ENCODE measurements at regions of chr16 and their contacts with region 1.

Region 1: DNA sequence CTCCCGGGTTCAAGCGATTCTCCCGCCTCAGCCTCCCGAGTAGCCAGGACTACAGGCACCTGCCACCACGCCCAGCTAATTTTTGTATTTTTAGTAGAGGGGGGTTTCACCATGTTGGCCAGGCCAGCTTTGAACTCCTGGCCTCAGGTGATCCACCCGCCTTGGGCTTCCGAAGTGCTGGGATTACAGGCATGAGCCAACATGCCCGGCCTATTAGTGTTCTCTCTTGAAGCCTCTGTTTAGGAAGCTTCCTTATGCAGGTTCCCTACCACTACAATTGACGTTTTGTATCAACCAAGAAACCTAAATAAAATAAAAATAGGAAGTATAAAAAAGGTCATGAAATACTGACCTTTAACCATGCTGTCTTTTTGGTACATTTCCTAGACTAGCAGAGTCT is 16.0 kb downstream of the CHST5 start:
- DNase-seq: no peak
- H3K4me3 ChIP-seq: no peak overlapping the region
- CTCF ChIP-seq: no peak

Region 2: DNA sequence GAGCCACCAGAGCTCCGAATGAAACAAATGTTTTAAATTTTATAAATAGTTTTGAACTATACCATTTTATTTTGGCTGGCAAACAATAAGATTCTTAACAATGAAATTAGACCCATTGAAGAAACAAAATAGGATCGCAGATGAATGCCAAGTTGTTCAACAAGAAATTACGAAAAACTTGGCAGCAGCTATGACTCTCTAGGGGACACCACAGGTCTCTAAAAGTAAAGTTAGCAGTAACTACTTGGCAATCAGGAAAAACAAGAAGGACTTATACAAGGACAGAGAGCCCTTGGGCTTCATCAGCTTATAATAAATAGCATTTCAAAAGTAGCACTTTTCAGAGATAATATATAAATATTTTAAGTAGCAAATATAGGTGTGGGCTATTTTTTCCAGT is 1827.0 kb before region 1 on chr16:
- CTCF ChIA-PET with region 1: no interaction called
- POLR2A ChIA-PET with region 1: no interaction called
- DNase-seq: no peak
- H3K4me3 ChIP-seq: no peak overlapping the region
- CTCF ChIP-seq: no peak

Region 3: DNA sequence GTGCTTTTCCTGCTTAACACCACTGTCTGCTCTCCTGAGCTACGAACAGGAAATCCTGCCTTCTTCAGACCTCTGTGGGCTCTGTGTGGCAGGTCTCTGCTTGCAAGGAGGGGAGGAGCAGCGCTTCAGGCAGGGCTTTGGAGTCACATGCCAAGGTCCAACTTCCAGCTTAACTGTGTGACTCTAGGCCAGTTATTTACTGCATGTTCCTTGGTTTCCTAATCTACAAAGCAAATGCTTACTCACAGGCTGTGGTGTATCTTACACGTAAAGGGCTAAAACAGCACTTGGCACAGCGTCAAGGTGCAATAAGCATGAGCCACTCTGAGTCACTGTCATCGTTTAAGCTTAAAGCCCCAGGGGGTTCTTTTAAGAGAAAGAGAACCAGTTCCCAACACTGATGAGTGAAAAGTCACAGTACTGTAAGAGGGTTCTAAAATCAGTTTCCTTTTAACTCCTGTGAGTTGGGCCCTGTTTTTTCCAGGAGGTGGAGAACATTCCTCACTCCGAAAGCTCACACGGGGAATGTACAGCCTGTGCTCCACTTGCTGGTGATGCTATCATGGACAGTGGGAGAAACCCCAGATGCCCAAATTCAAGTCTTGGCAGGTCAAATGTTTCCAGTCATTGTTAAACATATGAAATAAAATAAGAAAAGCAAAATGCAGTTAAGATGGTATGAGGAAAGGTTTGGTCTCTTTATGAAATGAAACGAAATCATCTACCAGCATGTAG is 214.3 kb before region 1 on chr16:
- CTCF ChIA-PET with region 1: no interaction called
- POLR2A ChIA-PET with region 1: no interaction called
- DNase-seq: peak; percentile 99
- H3K4me3 ChIP-seq: peak overlapping the region; percentile 10; the same call in 1 of the 2 replicates
- CTCF ChIP-seq: no peak

Region 4: DNA sequence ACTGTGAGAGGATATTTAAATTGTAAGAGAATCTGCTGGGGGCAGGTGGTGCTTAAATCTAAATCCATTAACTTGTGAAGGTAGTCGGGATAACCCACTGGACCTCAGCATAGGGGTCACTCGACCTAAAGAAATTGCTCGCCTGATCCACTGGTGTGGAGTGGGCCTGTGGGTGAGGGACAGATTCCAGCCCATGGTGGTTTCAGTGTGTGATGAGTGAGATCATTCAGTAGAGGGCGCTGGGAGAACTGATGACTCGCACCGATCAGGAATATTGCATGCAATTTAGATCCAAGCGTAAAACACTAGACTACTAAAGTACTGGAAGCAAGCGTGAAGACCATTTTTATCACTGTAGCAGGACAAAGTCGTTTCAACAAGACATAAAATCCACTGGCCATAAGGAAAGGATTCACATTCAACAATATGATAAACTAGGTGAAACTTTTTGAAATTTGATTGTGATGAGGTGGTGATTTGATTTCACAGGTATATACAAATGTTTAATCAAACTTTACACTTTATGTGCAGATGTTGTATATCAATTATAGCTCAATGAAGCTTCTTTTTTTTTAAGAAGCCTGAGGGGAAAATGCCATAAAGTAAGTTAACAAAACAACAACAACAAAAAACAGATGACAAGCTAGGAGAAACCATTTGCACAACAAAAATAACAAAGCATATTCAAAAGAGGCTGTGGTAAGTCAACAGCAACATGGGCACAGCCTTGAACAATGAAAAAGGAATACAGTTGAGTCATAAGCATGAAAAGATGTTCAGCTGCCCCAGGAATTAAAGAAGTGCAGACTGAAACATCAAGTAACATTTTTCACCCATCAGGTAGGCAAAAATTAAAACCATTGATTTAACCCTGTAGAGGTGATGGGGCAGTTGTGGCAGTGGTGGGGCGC is 47.9 kb before region 1 on chr16:
- CTCF ChIA-PET with region 1: interaction called, 18 read pairs
- POLR2A ChIA-PET with region 1: no interaction called
- DNase-seq: peak; percentile 9
- H3K4me3 ChIP-seq: no peak overlapping the region
- CTCF ChIP-seq: peak; percentile 78

Region 5: GRCh38 chr16:75506567-75506966 is 13.3 kb before region 1 on chr16:
- CTCF ChIA-PET with region 1: interaction called, 15 read pairs
- POLR2A ChIA-PET with region 1: interaction called, 8 read pairs
- DNase-seq: no peak
- H3K4me3 ChIP-seq: no peak overlapping the region
- CTCF ChIP-seq: no peak

Region 6: DNA sequence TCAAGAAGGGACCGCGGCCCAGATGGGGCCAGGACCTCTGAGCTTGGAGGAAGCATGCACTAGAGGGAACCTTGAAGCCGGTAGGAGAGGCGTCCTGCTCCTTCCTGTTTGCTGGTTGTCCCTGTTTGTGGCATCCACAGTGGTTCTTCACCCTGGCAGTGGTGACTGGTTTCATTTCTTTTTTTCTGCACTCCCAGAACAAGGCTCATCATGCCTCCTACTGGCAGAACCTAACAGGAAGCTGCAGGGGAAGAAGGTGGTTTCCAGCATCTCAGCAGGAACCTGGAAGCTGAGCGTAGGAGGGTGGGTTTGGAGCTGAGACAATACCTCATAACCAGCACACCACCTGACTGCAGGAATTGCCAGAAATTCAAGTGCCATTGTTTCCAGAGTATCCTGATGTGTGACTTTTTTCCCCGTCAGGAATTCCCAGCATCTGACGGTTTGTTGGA is 30.4 kb after region 1 on chr16:
- CTCF ChIA-PET with region 1: interaction called, 24 read pairs
- POLR2A ChIA-PET with region 1: interaction called, 3 read pairs
- DNase-seq: no peak
- H3K4me3 ChIP-seq: no peak overlapping the region
- CTCF ChIP-seq: peak; percentile 17

Region 7: DNA sequence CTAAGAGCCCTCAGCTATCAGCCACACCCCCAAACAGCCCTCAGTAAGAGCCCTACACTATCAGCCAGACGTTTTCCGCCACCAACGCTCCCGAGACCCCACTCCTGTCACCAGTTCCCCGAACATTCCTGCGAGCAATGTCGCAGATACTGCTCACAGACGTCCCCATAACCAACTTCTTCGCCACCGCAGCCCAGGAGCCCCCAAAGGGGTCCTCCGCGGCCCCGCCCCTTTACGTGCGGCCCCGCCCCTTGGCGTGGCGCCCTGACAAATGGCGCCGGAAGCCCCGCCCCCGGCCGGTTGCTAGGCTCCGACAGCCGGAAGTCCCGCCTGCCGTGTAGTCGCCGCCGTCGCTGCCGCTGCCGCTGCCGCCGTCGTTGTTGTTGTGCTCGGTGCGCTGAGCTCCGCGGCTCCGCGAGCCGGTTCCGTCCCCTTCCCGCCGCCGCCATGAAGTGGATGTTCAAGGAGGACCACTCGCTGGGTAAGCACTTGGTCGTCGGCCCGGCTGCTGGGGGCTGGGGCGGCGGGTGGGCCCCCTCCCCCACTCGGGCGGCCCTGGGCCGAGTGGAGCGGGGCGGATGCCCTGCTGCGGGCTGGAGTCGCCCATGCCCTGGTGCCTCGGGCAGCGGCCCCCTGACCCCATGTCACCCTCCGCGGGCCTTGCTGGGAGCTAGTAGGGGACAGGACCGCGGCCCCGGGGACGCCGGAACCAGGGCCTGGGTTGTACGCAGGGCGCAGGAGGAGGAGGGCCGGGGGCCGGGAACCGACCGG is 46.3 kb after region 1 on chr16 and contains the start of gene GABARAPL2:
- CTCF ChIA-PET with region 1: interaction called, 20 read pairs
- POLR2A ChIA-PET with region 1: interaction called, 5 read pairs
- DNase-seq: no peak
- H3K4me3 ChIP-seq: peak within 1 kb of the TSS; percentile 84
- CTCF ChIP-seq: no peak